ENCODE measurements at regions of chr3 and their contacts with region 1.

Region 1: GRCh38 chr3:36700537-36701248 is 63.7 kb downstream of the DCLK3 start:
- DNase-seq: peak; percentile 59 to 85
- ATAC-seq: peak; percentile 73
- H3K4me3 ChIP-seq: no peak overlapping the region
- H3K27ac ChIP-seq: no peak overlapping the region
- H3K4me1 ChIP-seq: no peaks in the 10 kb centered on the region
- H3K27me3 ChIP-seq: no peaks in the 10 kb centered on the region

Region 2: DNA sequence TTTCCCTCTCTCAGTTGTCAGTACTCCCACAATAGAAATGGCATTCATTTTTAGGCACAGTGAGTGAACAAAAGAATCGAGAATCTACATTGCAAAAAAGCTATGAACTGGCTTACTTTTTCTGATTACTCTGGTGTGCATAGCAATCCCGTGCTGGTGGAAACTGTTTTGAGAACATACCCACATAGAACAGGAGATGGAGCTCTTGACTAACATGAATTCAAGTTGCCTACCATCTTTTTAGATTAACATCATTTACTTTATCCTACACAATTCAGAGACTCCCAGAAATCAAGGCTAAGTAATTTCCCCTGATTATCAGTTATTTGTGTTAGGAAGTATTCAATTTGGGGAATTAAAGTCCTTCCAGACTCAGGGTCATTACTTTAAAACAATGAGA is 734.8 kb before region 1 on chr3:
- intact Hi-C with region 1: loop called (anchors 1 to 2 kb)
- DNase-seq: no peak
- ATAC-seq: peak; percentile 82
- H3K4me3 ChIP-seq: no peak overlapping the region
- H3K27ac ChIP-seq: no peak overlapping the region
- H3K4me1 ChIP-seq: no peaks in the 10 kb centered on the region
- H3K27me3 ChIP-seq: no peaks in the 10 kb centered on the region

Region 3: DNA sequence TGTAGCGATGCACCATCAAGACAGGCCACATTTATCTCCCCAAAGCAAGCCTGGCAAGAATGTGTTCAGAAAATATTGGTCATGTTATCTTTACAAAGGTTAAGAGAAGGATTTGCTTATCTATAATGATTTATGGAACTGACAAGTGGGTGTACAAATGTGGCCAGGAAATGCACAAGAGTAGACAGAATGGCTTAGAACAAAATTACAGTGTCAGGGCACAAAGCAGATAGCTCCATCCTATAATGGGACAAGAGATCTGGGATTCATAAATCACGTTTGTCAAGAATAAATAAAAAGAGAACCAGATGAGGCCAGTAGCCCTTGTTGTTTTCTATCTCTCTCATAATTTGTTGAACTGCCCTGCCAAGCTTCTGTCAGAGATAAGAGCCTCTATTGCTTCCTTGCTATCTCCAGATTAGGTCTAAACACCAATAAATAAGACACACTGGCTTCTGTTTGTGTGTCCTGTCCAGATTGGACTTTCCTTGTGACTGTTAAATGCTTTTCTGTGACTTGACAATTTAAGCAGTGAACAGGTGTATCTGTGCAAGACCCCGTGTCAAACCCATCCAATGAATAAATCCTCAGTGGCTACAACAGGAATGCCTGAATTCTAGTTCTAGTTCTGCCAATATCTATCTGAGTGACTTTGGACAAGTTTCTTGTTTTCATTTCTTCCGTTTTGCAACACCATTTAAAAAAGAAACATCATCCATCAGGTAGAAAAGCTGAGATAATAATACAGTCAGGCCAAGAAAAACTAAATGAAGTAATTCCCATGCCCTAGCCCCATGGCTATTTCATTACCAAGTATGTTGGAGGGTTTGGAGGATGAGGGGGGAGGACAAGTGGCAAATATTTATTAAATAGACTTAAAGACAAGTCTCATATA is 93.6 kb before region 1 on chr3:
- intact Hi-C with region 1: no loop called
- DNase-seq: no peak
- ATAC-seq: no peak
- H3K4me3 ChIP-seq: no peak overlapping the region
- H3K27ac ChIP-seq: no peak overlapping the region
- H3K4me1 ChIP-seq: peaks cover 4 to 6% of the 10 kb centered on the region in 2 donors
- H3K27me3 ChIP-seq: no peaks in the 10 kb centered on the region

Region 4: GRCh38 chr3:36738702-36739101 is 38.0 kb after region 1 on chr3:
- intact Hi-C with region 1: no loop called
- DNase-seq: no peak
- ATAC-seq: no peak
- H3K4me3 ChIP-seq: no peak overlapping the region
- H3K27ac ChIP-seq: no peak overlapping the region
- H3K4me1 ChIP-seq: no peaks in the 10 kb centered on the region
- H3K27me3 ChIP-seq: no peaks in the 10 kb centered on the region

Measured in aorta (tissue), 5 donors.